ENCODE measurements at regions of chr1 and their contacts with region 1.

Region 1: GRCh38 chr1:20165522-20165951 is 20.4 kb upstream of the UBXN10 start:
- DNase-seq: no peak
- H3K4me3 ChIP-seq: no peak overlapping the region
- H3K27me3 ChIP-seq: peaks cover 6% of the 10 kb centered on the region
- CTCF ChIP-seq: no peak

Region 2: GRCh38 chr1:20178634-20179370 is 13.3 kb after region 1 on chr1:
- CTCF ChIA-PET with region 1: interaction called, 12 read pairs
- POLR2A ChIA-PET with region 1: no interaction called
- DNase-seq: no peak
- H3K4me3 ChIP-seq: no peak overlapping the region
- H3K27me3 ChIP-seq: peaks cover 3% of the 10 kb centered on the region
- CTCF ChIP-seq: no peak

Region 3: GRCh38 chr1:20255666-20256065 is 90.1 kb after region 1 on chr1:
- CTCF ChIA-PET with region 1: no interaction called
- POLR2A ChIA-PET with region 1: no interaction called
- DNase-seq: no peak
- H3K4me3 ChIP-seq: no peak overlapping the region
- H3K27me3 ChIP-seq: peaks cover 1% of the 10 kb centered on the region; the same call in 1 of the 2 replicates
- CTCF ChIP-seq: no peak

Region 4: GRCh38 chr1:20348326-20348915 is 182.9 kb after region 1 on chr1:
- CTCF ChIA-PET with region 1: no interaction called
- POLR2A ChIA-PET with region 1: no interaction called
- DNase-seq: no peak
- H3K4me3 ChIP-seq: no peak overlapping the region
- H3K27me3 ChIP-seq: peaks cover 2% of the 10 kb centered on the region
- CTCF ChIP-seq: no peak

Measured in BJ (cell line).